Heart right ventricle (tissue), 16 donors: ENCODE measurements at regions of chr3 and their contacts with region 1.

Region 1: GRCh38 chr3:9422712-9423424 is 25.5 kb downstream of the SETD5 start:
- DNase-seq: peak in 1 of 2 donors; percentile 93
- ATAC-seq: peak; percentile 94 to 98 (median 97)
- H3K4me3 ChIP-seq: peak overlapping the region in 5 of 10 donors; percentile 5 to 17 (median 13)
- H3K27ac ChIP-seq: peak overlapping the region in 9 of 10 donors; percentile 66 to 87 (median 77)
- H3K4me1 ChIP-seq: peaks cover 3 to 86% (median 61%) of the 10 kb centered on the region in 9 donors
- H3K27me3 ChIP-seq: no peaks in the 10 kb centered on the region
- CTCF ChIP-seq: peak; percentile 9 to 67 (median 54)

Region 2: GRCh38 chr3:9352917-9353752 is 69.7 kb before region 1 on chr3:
- intact Hi-C with region 1: loop called in 4 of 10 experiments (anchors 2 to 5 kb)
- DNase-seq: peak; percentile 45 to 70
- ATAC-seq: peak; percentile 61 to 87 (median 80)
- H3K4me3 ChIP-seq: no peak overlapping the region
- H3K27ac ChIP-seq: no peak overlapping the region
- H3K4me1 ChIP-seq: peaks cover 0 to 14% (median 4%) of the 10 kb centered on the region in 9 donors
- H3K27me3 ChIP-seq: no peaks in the 10 kb centered on the region
- CTCF ChIP-seq: peak; percentile 77 to 95 (median 88)

Region 3: DNA sequence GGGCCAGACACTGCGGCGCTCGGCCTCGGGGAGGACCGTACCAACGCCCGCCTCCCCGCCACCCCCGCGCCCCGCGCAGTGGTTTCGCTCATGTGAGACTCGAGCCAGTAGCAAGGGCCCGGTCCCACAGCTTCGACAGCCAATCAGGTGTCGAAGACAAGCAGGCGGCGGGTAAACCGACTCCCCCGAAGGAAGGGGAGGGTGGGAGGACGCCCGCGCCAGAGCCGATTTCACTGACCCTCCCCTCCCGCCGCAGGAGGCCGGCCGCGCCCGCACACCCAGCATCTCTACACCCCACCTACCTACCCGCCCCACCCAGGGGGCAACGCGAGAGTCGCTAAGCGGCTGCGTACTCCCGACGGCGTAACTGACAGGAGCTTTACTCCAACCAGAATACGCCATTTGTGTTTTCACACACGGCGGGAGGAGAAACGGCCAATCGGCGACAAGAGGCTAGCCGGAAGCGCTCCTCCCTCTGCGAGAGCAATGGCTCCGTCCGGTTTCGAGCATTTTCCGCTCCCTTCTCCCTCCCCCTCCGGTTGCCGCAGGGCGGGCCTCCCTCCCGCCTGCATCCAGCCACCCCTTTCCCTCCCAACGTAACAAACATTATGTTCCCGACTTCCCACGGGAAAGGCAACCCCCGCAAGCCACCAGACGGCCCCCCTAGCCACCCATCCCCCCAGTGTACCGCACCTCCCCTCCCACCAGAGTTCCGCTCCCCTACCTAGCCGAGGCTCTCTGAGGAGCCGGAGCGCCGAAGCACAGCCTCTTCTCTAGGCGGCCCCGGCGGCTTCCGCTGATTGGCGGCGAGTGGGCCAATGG is 26.0 kb before region 1 on chr3:
- intact Hi-C with region 1: loop called in 4 of 10 experiments (anchors 1 to 2 kb)
- DNase-seq: peak; percentile 98
- ATAC-seq: peak; percentile 85 to 95 (median 91)
- H3K4me3 ChIP-seq: peak overlapping the region; percentile 49 to 97 (median 90)
- H3K27ac ChIP-seq: peak overlapping the region; percentile 90 to 99 (median 99)
- H3K4me1 ChIP-seq: peaks cover 16 to 77% (median 67%) of the 10 kb centered on the region in 9 donors
- H3K27me3 ChIP-seq: no peaks in the 10 kb centered on the region
- CTCF ChIP-seq: peak in 1 of 9 donors; percentile 3